Naive thymus-derived CD4-positive, alpha-beta T cell (primary cell): ENCODE measurements at regions of chr6 and their contacts with region 1.

Region 1: GRCh38 chr6:133916650-133917151 is 27.8 kb downstream of the TCF21 start:
- DNase-seq: peak; percentile 15 to 74 (median 49)
- ATAC-seq: peak; percentile 81
- H3K4me3 ChIP-seq: no peak overlapping the region
- H3K4me3 Mint-ChIP-seq: peak overlapping the region in 5 of 10 donors; percentile 3 to 54 (median 10)
- H3K27ac ChIP-seq: no peak overlapping the region
- H3K27ac Mint-ChIP-seq: no peak overlapping the region
- H3K4me1 ChIP-seq: no peaks in the 10 kb centered on the region
- H3K4me1 Mint-ChIP-seq: peaks cover 0 to 5% (median 4%) of the 10 kb centered on the region in 7 donors
- H3K27me3 ChIP-seq: peaks cover 0 to 4% of the 10 kb centered on the region in 2 donors
- H3K27me3 Mint-ChIP-seq: peaks cover 18 to 45% (median 29%) of the 10 kb centered on the region in 5 donors

Region 2: DNA sequence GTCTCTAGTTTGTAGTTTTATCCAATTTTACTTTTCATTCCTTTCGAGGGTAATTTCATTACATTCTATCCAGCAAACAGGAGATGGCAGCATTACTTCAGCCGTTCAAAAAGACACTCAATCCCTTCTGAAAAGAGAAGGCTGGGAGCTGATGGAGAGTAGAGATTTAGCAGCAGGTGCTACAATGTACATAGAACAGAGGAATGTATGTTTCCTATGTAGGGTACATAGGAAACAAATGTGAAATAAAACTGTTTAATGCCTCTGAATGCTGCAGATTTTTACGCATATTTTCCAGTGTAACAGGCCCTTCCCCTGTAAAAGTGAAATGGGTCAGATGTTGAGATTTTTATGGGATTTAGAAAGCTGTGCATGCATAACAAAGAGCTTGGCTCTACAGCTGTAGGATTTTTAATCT is 1086.4 kb before region 1 on chr6:
- CTCF ChIA-PET with region 1: interaction called, 3 read pairs
- POLR2A ChIA-PET with region 1: no interaction called
- intact Hi-C with region 1: loop called in 1 of 2 experiments (anchors 5 kb)
- DNase-seq: no peak
- ATAC-seq: no peak
- H3K4me3 ChIP-seq: no peak overlapping the region
- H3K4me3 Mint-ChIP-seq: no peak overlapping the region
- H3K27ac ChIP-seq: no peak overlapping the region
- H3K27ac Mint-ChIP-seq: no peak overlapping the region
- H3K4me1 ChIP-seq: no peaks in the 10 kb centered on the region
- H3K4me1 Mint-ChIP-seq: no peaks in the 10 kb centered on the region
- H3K27me3 ChIP-seq: no peaks in the 10 kb centered on the region
- H3K27me3 Mint-ChIP-seq: peaks cover 0 to 6% (median 0%) of the 10 kb centered on the region in 5 donors

Region 3: DNA sequence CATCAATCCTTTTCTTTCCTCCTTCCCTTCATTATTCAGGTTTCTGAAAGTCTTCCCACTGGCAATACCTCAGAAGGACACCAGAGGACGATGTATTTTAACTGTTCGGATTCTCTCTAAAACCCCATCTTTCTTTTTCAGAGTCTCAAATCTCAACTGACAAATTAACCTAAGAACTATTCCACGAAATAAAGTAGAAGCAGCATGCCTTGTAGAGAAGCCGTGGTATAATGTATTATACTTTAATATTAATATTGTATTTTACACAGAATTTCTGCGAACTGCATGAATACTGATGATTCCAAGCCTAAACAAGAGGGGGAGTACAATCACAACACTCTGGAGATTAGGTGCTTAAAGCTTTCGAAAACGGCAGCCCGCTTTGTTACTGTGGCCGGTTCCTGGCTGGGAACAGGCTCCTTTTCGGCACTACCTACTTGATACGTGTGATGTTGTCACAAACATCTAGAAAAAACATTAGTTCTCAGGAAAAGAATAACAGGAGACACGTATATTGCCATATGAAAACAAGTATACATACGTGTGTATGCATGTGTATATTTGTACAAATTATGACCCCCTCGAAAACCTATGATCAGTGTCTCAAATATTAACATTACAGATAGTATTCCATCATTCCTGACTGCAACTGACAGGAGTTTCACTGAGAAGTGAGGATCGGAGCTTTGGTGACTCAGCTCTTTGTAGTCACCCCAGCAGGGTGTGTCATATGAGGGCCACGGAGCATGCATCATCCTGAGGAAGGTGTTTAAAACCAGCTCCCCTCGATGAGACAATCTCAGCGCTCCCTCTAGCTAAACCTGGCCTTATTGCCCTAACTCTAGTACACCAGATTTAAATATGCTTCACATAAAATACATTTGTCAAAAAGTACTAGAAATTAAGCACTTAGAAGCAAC is 347.5 kb before region 1 on chr6:
- CTCF ChIA-PET with region 1: interaction called, 4 read pairs
- POLR2A ChIA-PET with region 1: no interaction called
- intact Hi-C with region 1: loop called (anchors 1 to 2 kb)
- DNase-seq: no peak
- ATAC-seq: no peak
- H3K4me3 ChIP-seq: no peak overlapping the region
- H3K4me3 Mint-ChIP-seq: peak overlapping the region; percentile 47 to 77 (median 62)
- H3K27ac ChIP-seq: no peak overlapping the region
- H3K27ac Mint-ChIP-seq: no peak overlapping the region
- H3K4me1 ChIP-seq: no peaks in the 10 kb centered on the region
- H3K4me1 Mint-ChIP-seq: peaks cover 0 to 8% (median 6%) of the 10 kb centered on the region in 7 donors
- H3K27me3 ChIP-seq: no peaks in the 10 kb centered on the region
- H3K27me3 Mint-ChIP-seq: peaks cover 14 to 54% (median 47%) of the 10 kb centered on the region in 5 donors

Region 4: DNA sequence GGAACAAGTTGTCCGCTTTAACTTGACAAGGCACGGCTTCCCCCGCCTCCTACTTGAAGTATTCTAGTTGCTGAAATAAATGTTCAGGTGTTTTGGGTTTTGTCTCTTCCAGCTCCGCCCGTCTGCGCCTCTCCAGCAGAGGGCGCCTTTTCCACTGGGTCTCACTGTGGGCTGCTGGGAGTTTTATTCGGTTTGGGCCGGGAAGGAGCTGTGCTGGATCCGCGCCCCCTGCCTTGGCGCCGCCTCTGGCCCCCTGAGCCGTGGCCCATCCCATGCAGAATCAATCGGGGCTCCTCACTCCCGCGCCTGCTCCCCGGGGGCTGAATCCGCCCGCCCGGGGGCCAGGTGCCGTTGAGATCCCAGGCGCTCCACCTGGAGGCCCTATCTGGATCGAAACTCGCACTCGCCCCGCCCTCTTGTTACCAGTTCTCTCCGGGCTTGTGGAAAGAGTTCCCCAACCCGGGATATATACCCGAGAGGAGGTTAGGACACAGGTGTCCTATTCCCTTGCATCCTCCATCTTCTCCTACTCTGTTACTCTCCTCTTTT is 78.8 kb before region 1 on chr6:
- CTCF ChIA-PET with region 1: no interaction called
- POLR2A ChIA-PET with region 1: no interaction called
- intact Hi-C with region 1: loop called (anchors 1 kb)
- DNase-seq: peak; percentile 11 to 67 (median 43)
- ATAC-seq: peak; percentile 76
- H3K4me3 ChIP-seq: peak overlapping the region; percentile 21
- H3K4me3 Mint-ChIP-seq: peak overlapping the region; percentile 46 to 84 (median 70)
- H3K27ac ChIP-seq: no peak overlapping the region
- H3K27ac Mint-ChIP-seq: no peak overlapping the region
- H3K4me1 ChIP-seq: peaks cover 0 to 6% of the 10 kb centered on the region in 2 donors
- H3K4me1 Mint-ChIP-seq: peaks cover 0 to 10% (median 7%) of the 10 kb centered on the region in 7 donors
- H3K27me3 ChIP-seq: no peaks in the 10 kb centered on the region
- H3K27me3 Mint-ChIP-seq: peaks cover 10 to 48% (median 41%) of the 10 kb centered on the region in 5 donors